Breast epithelium (tissue), 4 donors: ENCODE measurements at regions of chr18 and their contacts with region 1.

Region 1: GRCh38 chr18:1581581-1581980 is 676.9 kb downstream of the ADCYAP1 start:
- DNase-seq: no peak
- H3K4me3 ChIP-seq: no peak overlapping the region
- H3K27ac ChIP-seq: no peak overlapping the region
- H3K4me1 ChIP-seq: no peaks in the 10 kb centered on the region
- H3K27me3 ChIP-seq: no peaks in the 10 kb centered on the region
- CTCF ChIP-seq: no peak
- POLR2A ChIP-seq: no peak

Region 2: GRCh38 chr18:2009942-2010697 is 428.5 kb after region 1 on chr18:
- intact Hi-C with region 1: loop called (anchors 5 kb)
- DNase-seq: no peak
- H3K4me3 ChIP-seq: no peak overlapping the region
- H3K27ac ChIP-seq: no peak overlapping the region
- H3K4me1 ChIP-seq: no peaks in the 10 kb centered on the region
- H3K27me3 ChIP-seq: no peaks in the 10 kb centered on the region
- CTCF ChIP-seq: no peak
- POLR2A ChIP-seq: no peak